ENCODE measurements at regions of chr6 and their contacts with region 1.

Region 1: GRCh38 chr6:36594029-36594815 is at the start of gene SRSF3:
- DNase-seq: peak; percentile 97
- ATAC-seq: peak; percentile 97
- total RNA-seq, gene SRSF3: 123 TPM

Region 2: DNA sequence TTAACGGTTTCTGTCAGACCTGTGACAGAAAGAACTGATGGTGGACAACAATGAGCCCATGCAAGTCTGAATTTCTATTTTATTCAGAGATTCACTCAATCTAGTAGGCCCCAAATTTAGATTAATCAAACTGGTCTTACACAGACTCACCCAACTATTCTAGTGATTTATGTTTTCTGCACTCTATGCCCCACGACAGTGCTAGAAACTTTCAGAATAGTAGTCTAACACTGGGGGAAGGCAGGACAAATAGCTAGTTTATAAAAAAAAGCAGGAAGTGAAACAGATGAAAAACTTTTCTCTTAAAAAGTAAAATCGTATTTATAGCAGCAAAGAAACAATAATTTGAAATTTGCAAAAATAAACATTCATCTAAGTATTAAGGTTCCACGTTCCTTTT is 1458.0 kb before region 1 on chr6:
- intact Hi-C with region 1: no loop called
- DNase-seq: no peak
- ATAC-seq: no peak

Region 3: GRCh38 chr6:36463676-36464075 is 130.5 kb before region 1 on chr6:
- intact Hi-C with region 1: no loop called
- DNase-seq: no peak
- ATAC-seq: no peak

Region 4: DNA sequence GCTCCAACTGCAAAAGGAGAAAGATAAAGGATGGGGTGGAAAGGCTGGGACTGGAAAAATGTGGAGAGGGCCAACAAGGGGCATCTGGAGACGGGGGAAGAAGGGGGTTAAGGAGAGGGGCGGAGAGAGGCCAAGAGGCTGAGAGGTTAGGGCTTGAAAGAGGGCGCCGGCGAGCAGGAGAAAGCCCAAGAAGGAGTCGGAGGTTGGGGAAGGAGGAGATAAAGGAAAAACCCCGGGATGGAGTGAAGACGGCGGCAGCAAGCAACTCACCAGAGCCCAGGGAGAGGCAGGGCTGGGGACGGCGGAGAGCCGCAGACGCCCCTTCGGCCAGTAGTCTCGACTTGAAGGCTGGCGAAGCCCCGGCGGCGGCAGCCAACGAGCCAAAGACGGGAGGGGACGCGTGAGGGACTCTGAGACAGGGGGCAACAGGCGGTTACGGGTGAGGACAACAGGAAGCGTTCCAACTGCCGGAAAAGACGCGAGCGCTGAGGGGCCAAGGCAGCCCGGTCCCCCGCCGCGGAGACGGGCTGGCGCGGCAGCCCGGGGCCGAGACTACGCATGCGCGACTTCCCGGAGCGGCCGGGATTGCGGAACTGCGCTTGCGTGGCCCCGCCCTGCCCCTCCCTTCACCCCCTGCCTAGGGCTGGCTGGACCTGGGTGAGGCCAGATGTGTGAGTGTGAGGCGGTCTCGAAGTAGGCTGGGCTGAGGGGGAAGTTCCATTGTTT is 47.1 kb before region 1 on chr6 and contains the start of gene STK38:
- intact Hi-C with region 1: loop called (anchors 10 kb)
- DNase-seq: peak; percentile 95
- ATAC-seq: peak; percentile 97
- total RNA-seq, gene STK38: 19.4 TPM